Activated naive CD4-positive, alpha-beta T cell treated with anti-CD3 and anti-CD28 coated beads for 36 hours (primary cell): ENCODE measurements at regions of chr11 and their contacts with region 1.

Region 1: GRCh38 chr11:118338637-118339061 is 3.9 kb downstream of the CD3D start:
- DNase-seq: peak; percentile 97
- H3K4me3 Mint-ChIP-seq: peak overlapping the region; percentile 81
- H3K27ac Mint-ChIP-seq: peak overlapping the region; percentile 100
- H3K4me1 Mint-ChIP-seq: peaks cover 43% of the 10 kb centered on the region
- H3K27me3 Mint-ChIP-seq: no peaks in the 10 kb centered on the region

Region 2: GRCh38 chr11:117817368-117818040 is 521.1 kb before region 1 on chr11:
- CTCF ChIA-PET with region 1: no interaction called
- intact Hi-C with region 1: loop called (anchors 1 kb)
- DNase-seq: peak; percentile 98
- H3K4me3 Mint-ChIP-seq: peak overlapping the region; percentile 56
- H3K27ac Mint-ChIP-seq: peak overlapping the region; percentile 95
- H3K4me1 Mint-ChIP-seq: peaks cover 65% of the 10 kb centered on the region
- H3K27me3 Mint-ChIP-seq: no peaks in the 10 kb centered on the region

Region 3: DNA sequence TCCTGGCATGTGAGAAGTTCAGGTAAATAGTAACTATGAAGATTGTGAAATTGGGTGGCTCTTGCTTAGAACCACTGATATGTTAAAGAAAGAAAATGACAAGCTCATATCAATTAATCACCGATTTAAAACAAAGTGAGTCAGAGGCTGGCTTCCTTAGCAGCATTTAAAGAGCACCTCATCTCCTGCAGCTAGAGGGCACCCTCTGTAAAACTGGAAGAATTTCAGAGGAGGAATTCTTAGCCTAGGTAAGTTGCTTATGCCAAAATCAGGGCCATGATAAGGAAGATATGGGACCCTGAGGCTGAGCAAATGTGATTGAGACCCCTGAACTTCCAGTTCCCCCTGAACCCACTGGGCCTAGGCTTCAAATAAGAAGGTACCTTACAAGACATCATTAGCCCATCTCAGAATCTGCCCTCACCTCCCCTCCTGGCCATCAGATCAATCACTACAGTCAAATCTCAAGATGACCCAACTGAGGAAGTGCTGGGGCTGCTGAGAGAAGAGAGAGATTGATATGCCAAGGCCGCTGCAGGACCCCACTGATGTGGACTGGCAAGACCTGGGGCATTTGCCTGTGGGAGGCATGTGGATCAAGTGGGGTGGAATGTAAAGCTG is 42.7 kb before region 1 on chr11:
- CTCF ChIA-PET with region 1: interaction called, 110 read pairs
- intact Hi-C with region 1: no loop called
- DNase-seq: peak; percentile 76
- H3K4me3 Mint-ChIP-seq: no peak overlapping the region
- H3K27ac Mint-ChIP-seq: peak overlapping the region; percentile 8
- H3K4me1 Mint-ChIP-seq: peaks cover 15% of the 10 kb centered on the region
- H3K27me3 Mint-ChIP-seq: no peaks in the 10 kb centered on the region

Region 4: DNA sequence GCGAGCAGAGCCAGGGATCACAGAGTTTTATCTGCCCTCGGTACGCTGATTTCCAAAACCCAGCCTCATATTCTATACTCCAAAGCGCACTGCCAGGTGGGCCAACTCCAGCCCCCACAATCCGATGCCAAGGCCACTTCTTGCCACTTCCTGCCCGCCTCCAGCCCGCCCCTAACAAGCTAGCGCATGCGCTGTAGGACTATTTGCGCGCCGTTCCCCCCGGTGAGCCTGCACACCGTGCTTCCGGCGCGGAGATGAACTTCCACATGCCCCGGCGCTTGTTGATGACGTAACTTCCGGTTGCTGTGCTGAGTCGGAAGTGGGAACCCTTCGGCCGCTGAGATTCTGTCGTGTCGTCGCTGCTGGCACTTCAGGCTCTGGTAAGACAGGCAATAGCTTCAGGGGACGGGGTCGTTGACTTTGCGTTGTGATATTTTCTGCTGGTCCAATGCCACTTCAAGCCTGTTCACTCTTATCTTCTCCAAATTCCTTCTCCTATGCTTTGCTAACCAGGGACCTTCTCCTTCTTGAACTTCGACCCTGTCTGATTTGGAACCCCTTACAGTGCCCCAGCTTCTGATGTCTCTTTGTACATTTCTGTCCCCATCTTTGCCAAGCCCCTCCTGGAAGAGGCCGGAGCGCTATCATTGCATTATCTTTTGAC is 20.8 kb after region 1 on chr11 and contains the start of gene UBE4A:
- CTCF ChIA-PET with region 1: interaction called, 9 read pairs
- intact Hi-C with region 1: loop called (anchors 1 kb)
- DNase-seq: peak; percentile 100
- H3K4me3 Mint-ChIP-seq: peak within 1 kb of the TSS; percentile 99
- H3K27ac Mint-ChIP-seq: peak within 1 kb of the TSS; percentile 91
- H3K4me1 Mint-ChIP-seq: peaks cover 52% of the 10 kb centered on the region
- H3K27me3 Mint-ChIP-seq: no peaks in the 10 kb centered on the region
- total RNA-seq, gene UBE4A: 35.3 to 35.7 TPM

Region 5: GRCh38 chr11:118870396-118871345 is 532.0 kb after region 1 on chr11:
- CTCF ChIA-PET with region 1: no interaction called
- intact Hi-C with region 1: loop called (anchors 1 kb)
- DNase-seq: peak; percentile 80
- H3K4me3 Mint-ChIP-seq: peak overlapping the region; percentile 85
- H3K27ac Mint-ChIP-seq: peak overlapping the region; percentile 100
- H3K4me1 Mint-ChIP-seq: peaks cover 67% of the 10 kb centered on the region
- H3K27me3 Mint-ChIP-seq: no peaks in the 10 kb centered on the region